ENCODE measurements at regions of chr9 and their contacts with region 1.

Region 1: DNA sequence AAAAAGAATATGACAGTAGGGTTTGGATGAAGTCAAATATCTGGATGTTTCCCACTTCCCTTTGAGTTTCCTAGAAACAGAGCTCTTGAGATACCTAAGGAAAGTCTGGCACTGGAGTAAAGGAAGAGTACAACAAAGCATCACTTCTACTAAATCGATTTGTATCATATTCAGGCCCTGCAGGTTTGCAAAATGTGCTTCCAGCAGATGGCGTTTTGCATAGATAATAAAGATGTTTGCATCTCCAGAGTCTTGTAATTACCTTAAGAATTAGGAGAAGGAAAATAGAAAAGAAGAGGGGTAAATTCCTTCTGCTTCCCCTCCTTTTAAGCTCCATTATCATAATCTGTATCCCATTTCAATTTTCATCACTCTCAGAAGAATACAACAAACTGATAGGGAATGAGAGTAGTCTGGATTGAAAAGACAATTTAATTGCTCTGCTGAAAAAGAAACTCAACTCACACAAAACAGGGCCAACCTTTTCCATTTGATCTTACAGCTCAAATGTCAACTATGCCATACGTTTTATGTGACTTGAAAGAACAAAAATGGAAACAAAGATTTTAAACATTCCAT is 380.4 kb downstream of the PTPRD start:
- DNase-seq: no peak
- H3K4me3 ChIP-seq: no peak overlapping the region
- H3K27ac ChIP-seq: no peak overlapping the region
- H3K4me1 ChIP-seq: no peaks in the 10 kb centered on the region
- H3K27me3 ChIP-seq: no peaks in the 10 kb centered on the region
- CTCF ChIP-seq: peak; percentile 33 to 53

Region 2: DNA sequence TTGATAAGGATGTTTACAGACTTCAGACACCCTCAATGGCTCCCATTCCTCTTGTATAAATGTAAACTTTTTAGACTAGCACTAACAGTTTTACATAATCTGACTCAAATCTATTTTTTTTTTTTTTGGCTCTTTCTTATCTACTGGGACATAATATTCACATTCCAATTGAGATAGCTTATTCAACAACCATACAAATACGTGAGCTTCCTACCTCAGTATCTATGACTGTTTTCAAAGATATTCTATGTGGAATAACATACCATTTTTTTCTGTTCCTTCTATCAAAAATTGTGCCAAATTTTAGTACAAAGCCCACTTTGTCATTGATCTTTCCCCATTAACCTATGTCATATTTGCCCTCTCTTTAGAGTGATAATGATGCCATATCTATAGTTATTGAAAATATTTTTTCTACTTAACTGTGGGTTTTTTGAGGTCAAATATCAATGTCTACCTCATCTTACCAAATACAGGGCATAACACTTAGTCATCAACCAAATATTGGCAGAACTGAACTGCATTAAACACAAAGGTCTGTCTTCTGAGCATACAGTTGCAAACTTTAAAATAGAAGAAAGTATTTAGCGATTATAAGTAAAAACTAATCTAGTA is 102.3 kb before region 1 on chr9:
- CTCF ChIA-PET with region 1: no interaction called
- dilution Hi-C with region 1: no loop called
- in situ Hi-C with region 1: no loop called
- intact Hi-C with region 1: no loop called
- DNase-seq: no peak
- H3K4me3 ChIP-seq: no peak overlapping the region
- H3K27ac ChIP-seq: no peak overlapping the region
- H3K4me1 ChIP-seq: no peaks in the 10 kb centered on the region
- H3K27me3 ChIP-seq: no peaks in the 10 kb centered on the region
- CTCF ChIP-seq: no peak

Region 3: DNA sequence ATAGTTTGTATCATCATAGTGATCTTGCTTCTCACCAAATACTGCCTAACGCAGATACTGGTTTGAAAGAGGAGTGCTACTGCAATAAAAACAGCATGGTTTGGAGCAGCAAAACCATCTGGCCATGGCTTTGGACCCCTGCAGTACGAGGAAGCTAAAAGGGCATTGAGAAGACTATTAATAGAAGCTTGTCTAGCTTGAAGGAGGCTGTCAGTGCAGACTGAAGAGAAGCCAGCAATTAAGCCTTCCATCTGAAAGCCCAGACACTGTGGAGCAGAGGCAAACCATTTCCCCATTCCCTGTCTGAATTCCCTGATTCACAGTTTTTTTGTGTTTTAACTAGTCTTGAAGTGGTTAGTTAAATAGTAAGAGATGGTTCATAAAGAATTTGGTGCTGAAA is 98.7 kb after region 1 on chr9:
- CTCF ChIA-PET with region 1: no interaction called
- dilution Hi-C with region 1: no loop called
- in situ Hi-C with region 1: loop called in 1 of 2 experiments (anchors 25 kb)
- intact Hi-C with region 1: no loop called
- DNase-seq: no peak
- H3K4me3 ChIP-seq: no peak overlapping the region
- H3K27ac ChIP-seq: no peak overlapping the region
- H3K4me1 ChIP-seq: no peaks in the 10 kb centered on the region
- H3K27me3 ChIP-seq: no peaks in the 10 kb centered on the region
- CTCF ChIP-seq: no peak

Measured in mammary epithelial cell (primary cell).